ENCODE measurements at regions of chr7 and their contacts with region 1.

Region 1: GRCh38 chr7:47945261-47946001 is 2.8 kb downstream of the PKD1L1 start:
- DNase-seq: peak; percentile 77
- H3K4me3 Mint-ChIP-seq: no peak overlapping the region
- H3K27ac Mint-ChIP-seq: no peak overlapping the region
- H3K4me1 Mint-ChIP-seq: peaks cover 11% of the 10 kb centered on the region
- H3K27me3 Mint-ChIP-seq: no peaks in the 10 kb centered on the region
- CTCF ChIP-seq: peak; percentile 71

Region 2: DNA sequence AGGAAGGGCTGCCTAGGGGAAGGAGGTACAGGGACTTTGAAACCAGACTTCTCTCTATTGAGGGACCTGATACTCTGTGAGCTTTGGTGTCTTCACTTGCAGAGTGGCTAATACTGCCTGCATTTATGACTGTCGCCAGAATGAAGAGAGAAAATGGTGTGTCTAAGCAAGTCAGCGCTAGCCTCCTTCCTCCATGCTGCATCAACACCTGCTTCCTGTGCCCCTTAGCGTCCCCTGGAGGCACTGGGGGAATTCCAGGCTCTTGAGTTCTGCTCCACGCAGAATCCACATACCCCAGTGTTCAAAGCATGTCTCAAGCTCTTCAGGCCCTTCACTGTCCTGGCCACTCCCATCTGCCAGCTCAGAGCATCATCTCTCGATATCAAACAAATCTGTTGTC is 137.7 kb before region 1 on chr7:
- CTCF ChIA-PET with region 1: no interaction called
- POLR2A ChIA-PET with region 1: no interaction called
- intact Hi-C with region 1: no loop called
- DNase-seq: no peak
- H3K4me3 Mint-ChIP-seq: no peak overlapping the region
- H3K27ac Mint-ChIP-seq: no peak overlapping the region
- H3K4me1 Mint-ChIP-seq: peaks cover 6% of the 10 kb centered on the region
- H3K27me3 Mint-ChIP-seq: no peaks in the 10 kb centered on the region
- CTCF ChIP-seq: no peak

Region 3: GRCh38 chr7:47932016-47932415 is 13.4 kb before region 1 on chr7:
- CTCF ChIA-PET with region 1: interaction called, 24 read pairs
- POLR2A ChIA-PET with region 1: no interaction called
- intact Hi-C with region 1: no loop called
- DNase-seq: no peak
- H3K4me3 Mint-ChIP-seq: no peak overlapping the region
- H3K27ac Mint-ChIP-seq: no peak overlapping the region
- H3K4me1 Mint-ChIP-seq: no peaks in the 10 kb centered on the region
- H3K27me3 Mint-ChIP-seq: no peaks in the 10 kb centered on the region
- CTCF ChIP-seq: no peak

Region 4: GRCh38 chr7:48109848-48110663 is 164.6 kb after region 1 on chr7:
- CTCF ChIA-PET with region 1: interaction called, 314 read pairs
- POLR2A ChIA-PET with region 1: interaction called, 18 read pairs
- intact Hi-C with region 1: loop called (anchors 1 kb)
- DNase-seq: peak; percentile 78
- H3K4me3 Mint-ChIP-seq: no peak overlapping the region
- H3K27ac Mint-ChIP-seq: no peak overlapping the region
- H3K4me1 Mint-ChIP-seq: peaks cover 22% of the 10 kb centered on the region
- H3K27me3 Mint-ChIP-seq: no peaks in the 10 kb centered on the region
- CTCF ChIP-seq: peak; percentile 97

Region 5: GRCh38 chr7:48147078-48147591 is 201.7 kb after region 1 on chr7:
- CTCF ChIA-PET with region 1: interaction called, 12 read pairs
- POLR2A ChIA-PET with region 1: no interaction called
- intact Hi-C with region 1: no loop called
- DNase-seq: no peak
- H3K4me3 Mint-ChIP-seq: no peak overlapping the region
- H3K27ac Mint-ChIP-seq: no peak overlapping the region
- H3K4me1 Mint-ChIP-seq: no peaks in the 10 kb centered on the region
- H3K27me3 Mint-ChIP-seq: peaks cover 46% of the 10 kb centered on the region
- CTCF ChIP-seq: no peak

Region 6: DNA sequence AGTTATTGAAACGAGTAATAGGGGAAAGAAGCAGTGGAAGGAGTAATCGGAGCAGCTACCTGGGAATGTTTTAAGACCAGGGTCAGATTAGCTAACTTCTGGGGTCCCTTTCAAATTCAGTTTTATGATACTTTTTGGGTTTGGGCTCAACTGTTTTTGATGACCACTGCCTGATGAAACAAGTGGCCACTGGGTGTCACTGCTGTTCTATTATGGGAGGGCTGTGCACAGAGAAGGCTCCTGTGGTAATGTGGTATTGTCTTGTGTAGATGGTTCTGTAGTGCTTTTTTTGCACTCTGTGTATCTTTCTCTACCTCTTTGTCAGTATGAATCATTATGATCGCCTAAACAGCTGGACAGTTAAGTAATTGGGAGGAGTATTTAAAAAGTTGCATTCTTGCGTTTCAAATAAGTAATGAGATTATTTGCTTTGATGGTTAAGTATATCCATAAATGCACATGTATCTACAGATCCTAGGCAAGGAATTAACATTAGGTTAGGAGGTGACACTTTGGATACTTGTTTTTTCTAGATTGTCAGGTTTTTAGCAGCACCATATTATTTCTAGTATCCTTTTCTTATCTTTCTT is 354.2 kb after region 1 on chr7:
- CTCF ChIA-PET with region 1: no interaction called
- POLR2A ChIA-PET with region 1: interaction called, 3 read pairs
- intact Hi-C with region 1: loop called (anchors 10 kb)
- DNase-seq: peak; percentile 71
- H3K4me3 Mint-ChIP-seq: no peak overlapping the region
- H3K27ac Mint-ChIP-seq: no peak overlapping the region
- H3K4me1 Mint-ChIP-seq: peaks cover 12% of the 10 kb centered on the region
- H3K27me3 Mint-ChIP-seq: no peaks in the 10 kb centered on the region
- CTCF ChIP-seq: peak; percentile 76